Head of caudate nucleus (tissue), 42 donors: ENCODE measurements at regions of chr17 and their contacts with region 1.

Region 1: GRCh38 chr17:66727639-66728570 is 107.0 kb upstream of the CACNG5 start:
- DNase-seq: peak; percentile 64 to 92 (median 82)

Region 2: DNA sequence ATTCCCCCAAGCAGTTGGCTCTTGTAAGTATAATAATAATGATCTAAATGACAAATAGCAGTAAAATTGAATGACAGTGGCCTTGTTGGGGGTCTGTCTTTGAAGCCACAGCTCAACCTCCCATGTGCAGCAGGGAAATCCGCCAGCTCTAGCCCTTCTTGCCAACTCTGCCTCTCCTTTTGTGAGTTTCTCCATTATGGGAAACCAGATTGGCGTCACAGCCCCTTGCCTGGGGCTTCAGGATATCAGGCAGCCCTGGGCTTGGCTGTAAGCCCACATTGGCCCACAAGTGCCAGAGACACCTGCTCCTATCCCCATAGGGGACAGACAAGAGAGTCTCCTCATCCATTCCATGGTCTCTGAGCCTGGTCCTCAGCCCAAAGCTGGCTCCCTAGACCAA is 36.7 kb after region 1 on chr17:
- intact Hi-C with region 1: no loop called
- DNase-seq: peak in 16 of 42 donors; percentile 7 to 60 (median 22)

Region 3: GRCh38 chr17:66900126-66901010 is 172.5 kb after region 1 on chr17:
- intact Hi-C with region 1: loop called (anchors 5 kb)
- DNase-seq: no peak